CD4-positive, alpha-beta T cell (primary cell): ENCODE measurements at regions of chr6 and their contacts with region 1.

Region 1: DNA sequence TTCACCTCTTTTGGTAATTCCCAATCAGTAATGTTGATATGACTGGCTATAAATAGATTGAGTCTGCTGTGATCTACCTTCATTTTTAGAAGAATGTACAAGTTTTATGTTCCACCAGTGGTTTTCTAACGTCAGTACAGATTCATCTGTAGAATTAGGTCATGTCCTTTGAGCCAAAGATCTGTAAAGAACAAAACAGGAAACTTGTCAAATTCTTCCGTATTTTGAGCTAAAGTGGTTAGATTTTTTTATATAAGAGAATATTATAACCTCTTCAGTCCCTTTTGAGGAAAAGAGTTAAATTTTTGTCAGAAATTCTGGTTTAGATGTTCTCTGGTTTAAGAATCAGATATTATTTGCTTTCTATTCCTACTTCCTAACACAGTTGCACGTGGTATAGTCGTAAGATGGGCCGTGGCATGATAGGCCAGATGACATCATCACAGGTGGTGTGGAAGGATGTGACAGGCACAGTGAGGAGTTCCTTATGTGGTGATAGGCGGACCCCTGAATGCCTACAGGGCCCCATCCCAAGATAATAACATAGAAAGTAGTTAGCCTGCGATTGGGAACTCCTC is 62.3 kb downstream of the SNX9 start:
- DNase-seq: peak in 13 of 14 experiments; percentile 18 to 88 (median 50)
- ATAC-seq: peak; percentile 83
- H3K4me3 ChIP-seq: no peak overlapping the region
- H3K4me3 Mint-ChIP-seq: peak overlapping the region; percentile 6
- H3K27ac ChIP-seq: peak overlapping the region; percentile 83 to 93
- H3K27ac Mint-ChIP-seq: peak overlapping the region; percentile 95
- H3K4me1 ChIP-seq: peaks cover 16% of the 10 kb centered on the region
- H3K4me1 Mint-ChIP-seq: peaks cover 86% of the 10 kb centered on the region
- H3K27me3 ChIP-seq: no peaks in the 10 kb centered on the region
- H3K27me3 Mint-ChIP-seq: no peaks in the 10 kb centered on the region
- CTCF ChIP-seq: peak; percentile 19

Region 2: DNA sequence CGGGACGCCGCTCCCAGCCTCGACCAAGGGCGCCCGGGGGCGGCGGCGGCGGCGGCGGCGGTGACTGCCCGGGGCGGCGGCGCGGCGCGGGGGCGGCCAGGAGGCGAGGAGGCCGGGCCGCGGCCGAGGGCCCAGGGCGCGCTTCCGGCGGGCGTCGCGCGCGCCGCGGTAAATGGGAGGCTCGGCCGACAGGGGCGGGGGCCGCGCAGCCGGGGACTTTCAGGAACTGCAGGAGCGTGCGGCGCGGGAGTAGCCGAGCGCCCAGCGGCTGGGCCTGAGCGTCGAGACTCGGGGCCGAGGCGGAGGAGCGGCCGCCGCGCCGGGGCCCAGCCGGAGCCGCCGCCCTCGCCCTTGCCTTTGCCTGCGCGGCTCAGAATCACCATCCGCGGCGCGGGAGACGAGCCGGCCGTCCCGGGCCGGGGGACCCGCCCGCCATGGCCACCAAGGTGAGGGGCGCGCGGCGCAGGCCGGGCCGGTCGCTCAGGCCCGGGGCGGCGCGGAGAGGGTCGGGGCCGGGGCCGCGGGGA is 62.2 kb before region 1 on chr6 and contains the start of gene SNX9:
- CTCF ChIA-PET with region 1: interaction called, 4 read pairs
- POLR2A ChIA-PET with region 1: interaction called, 5 read pairs
- intact Hi-C with region 1: loop called in 1 of 2 experiments (anchors 1 kb)
- DNase-seq: peak in 13 of 14 experiments; percentile 38 to 88 (median 59)
- ATAC-seq: peak; percentile 46
- H3K4me3 ChIP-seq: peak within 1 kb of the TSS; percentile 78
- H3K4me3 Mint-ChIP-seq: peak within 1 kb of the TSS; percentile 96
- H3K27ac ChIP-seq: peak within 1 kb of the TSS; percentile 25 to 77
- H3K27ac Mint-ChIP-seq: peak within 1 kb of the TSS; percentile 98
- H3K4me1 ChIP-seq: peaks cover 17% of the 10 kb centered on the region
- H3K4me1 Mint-ChIP-seq: peaks cover 58% of the 10 kb centered on the region
- H3K27me3 ChIP-seq: no peaks in the 10 kb centered on the region
- H3K27me3 Mint-ChIP-seq: no peaks in the 10 kb centered on the region
- CTCF ChIP-seq: no peak
- total RNA-seq, gene SNX9: 46.6 to 48.5 TPM

Region 3: DNA sequence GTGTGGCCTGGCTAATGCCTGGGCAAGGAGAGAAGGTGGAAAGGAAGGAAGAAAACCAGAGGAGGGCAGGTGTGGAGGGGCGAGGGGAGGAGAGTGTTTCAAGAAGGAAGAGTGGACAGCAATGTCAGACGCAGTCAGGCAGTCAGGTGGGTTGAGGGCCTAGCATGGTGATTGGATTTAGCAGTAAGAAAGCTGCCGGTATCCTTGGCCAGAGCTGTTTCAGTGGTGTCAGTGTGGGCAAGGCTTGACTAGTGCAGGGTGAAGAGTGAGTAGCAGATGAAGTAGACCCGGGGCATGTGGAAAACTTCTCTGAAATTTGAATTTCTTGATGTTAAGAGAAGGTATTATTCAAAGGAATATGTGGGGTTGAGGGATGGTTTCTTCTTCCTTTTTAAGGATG is 35.3 kb before region 1 on chr6:
- CTCF ChIA-PET with region 1: no interaction called
- POLR2A ChIA-PET with region 1: no interaction called
- intact Hi-C with region 1: no loop called
- DNase-seq: no peak
- ATAC-seq: no peak
- H3K4me3 ChIP-seq: no peak overlapping the region
- H3K4me3 Mint-ChIP-seq: no peak overlapping the region
- H3K27ac ChIP-seq: no peak overlapping the region
- H3K27ac Mint-ChIP-seq: peak overlapping the region; percentile 8
- H3K4me1 ChIP-seq: peaks cover 20% of the 10 kb centered on the region
- H3K4me1 Mint-ChIP-seq: peaks cover 78% of the 10 kb centered on the region
- H3K27me3 ChIP-seq: no peaks in the 10 kb centered on the region
- H3K27me3 Mint-ChIP-seq: no peaks in the 10 kb centered on the region
- CTCF ChIP-seq: no peak

Region 4: DNA sequence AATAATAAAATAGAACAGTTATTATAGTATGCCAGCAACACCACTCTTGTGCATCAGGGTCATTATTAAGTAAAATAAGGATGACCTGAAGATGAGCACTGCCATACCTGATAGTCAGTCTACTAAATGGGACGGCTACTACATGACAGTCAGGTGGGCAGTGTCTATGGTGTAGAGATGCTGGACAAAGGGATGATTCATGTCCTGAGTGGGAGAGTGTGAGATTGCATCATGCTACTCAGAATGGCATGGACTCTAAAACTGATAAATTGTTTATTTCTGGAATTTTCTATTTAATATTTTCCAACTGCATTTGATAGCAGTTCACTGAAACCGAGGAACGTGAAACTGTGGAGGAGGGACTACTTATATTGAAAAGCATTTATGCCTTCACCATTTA is 23.5 kb before region 1 on chr6:
- CTCF ChIA-PET with region 1: interaction called, 3 read pairs
- POLR2A ChIA-PET with region 1: interaction called, 5 read pairs
- intact Hi-C with region 1: loop called in 1 of 2 experiments (anchors 2 kb)
- DNase-seq: no peak
- ATAC-seq: no peak
- H3K4me3 ChIP-seq: no peak overlapping the region
- H3K4me3 Mint-ChIP-seq: no peak overlapping the region
- H3K27ac ChIP-seq: no peak overlapping the region
- H3K27ac Mint-ChIP-seq: no peak overlapping the region
- H3K4me1 ChIP-seq: peaks cover 21% of the 10 kb centered on the region
- H3K4me1 Mint-ChIP-seq: peaks cover 88% of the 10 kb centered on the region
- H3K27me3 ChIP-seq: no peaks in the 10 kb centered on the region
- H3K27me3 Mint-ChIP-seq: no peaks in the 10 kb centered on the region
- CTCF ChIP-seq: no peak

Region 5: DNA sequence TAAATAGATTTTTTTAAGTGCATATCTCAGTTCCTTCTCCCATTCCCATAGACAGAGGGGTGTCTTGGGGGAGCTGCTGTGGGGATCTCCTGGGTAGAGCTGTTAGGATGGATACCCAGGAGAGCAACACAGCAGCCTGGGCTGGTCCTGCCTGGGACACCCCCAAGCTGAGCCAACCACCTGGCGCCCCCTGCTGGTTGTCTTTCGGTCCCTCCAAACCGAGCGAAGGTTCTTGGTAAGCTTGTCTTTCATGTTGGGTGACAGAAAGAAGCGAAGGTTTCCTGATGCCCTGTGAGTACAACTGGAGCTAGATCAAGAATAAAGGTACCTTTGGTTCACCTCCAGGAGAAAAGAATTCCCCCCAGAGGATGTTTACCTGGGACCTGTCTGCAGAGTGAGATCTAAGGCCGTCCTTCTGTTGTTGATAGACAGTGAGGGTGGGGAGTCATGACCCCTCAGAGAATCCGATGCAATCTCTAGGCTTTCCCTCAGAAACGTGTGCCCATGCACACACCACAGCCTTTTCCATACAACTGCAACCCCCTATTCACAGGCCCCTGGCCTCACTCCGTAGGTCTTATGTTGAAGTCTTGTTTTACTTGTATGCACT is 11.5 kb before region 1 on chr6:
- CTCF ChIA-PET with region 1: interaction called, 15 read pairs
- POLR2A ChIA-PET with region 1: interaction called, 13 read pairs
- intact Hi-C with region 1: no loop called
- DNase-seq: peak; percentile 75 to 92 (median 84)
- ATAC-seq: peak; percentile 74
- H3K4me3 ChIP-seq: no peak overlapping the region
- H3K4me3 Mint-ChIP-seq: no peak overlapping the region
- H3K27ac ChIP-seq: no peak overlapping the region
- H3K27ac Mint-ChIP-seq: peak overlapping the region; percentile 47
- H3K4me1 ChIP-seq: peaks cover 15% of the 10 kb centered on the region
- H3K4me1 Mint-ChIP-seq: peaks cover 39% of the 10 kb centered on the region
- H3K27me3 ChIP-seq: no peaks in the 10 kb centered on the region
- H3K27me3 Mint-ChIP-seq: no peaks in the 10 kb centered on the region
- CTCF ChIP-seq: peak; percentile 92

Region 6: DNA sequence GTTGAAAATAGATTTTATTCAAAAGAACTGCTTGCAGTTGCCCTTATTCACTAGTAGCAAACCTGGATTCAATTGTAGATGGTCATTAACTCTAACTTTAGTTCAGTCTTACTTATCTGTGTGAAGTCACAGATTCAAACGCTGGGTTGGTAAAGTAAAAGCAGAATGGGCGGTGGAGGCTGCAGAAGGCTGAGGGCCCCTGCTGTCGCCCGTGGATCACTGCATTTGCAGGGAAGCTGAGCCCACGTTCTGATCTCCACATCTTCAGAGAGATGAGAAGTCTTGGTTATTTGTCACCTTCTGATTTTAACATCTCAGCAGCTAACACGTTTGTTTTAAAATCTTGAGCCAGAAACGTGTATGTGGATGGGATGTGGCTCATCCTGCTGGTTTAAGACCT is 12.9 kb after region 1 on chr6:
- CTCF ChIA-PET with region 1: interaction called, 9 read pairs
- POLR2A ChIA-PET with region 1: interaction called, 5 read pairs
- intact Hi-C with region 1: loop called in 1 of 2 experiments (anchors 1 kb)
- DNase-seq: peak in 7 of 14 experiments; percentile 14 to 62 (median 39)
- ATAC-seq: peak; percentile 67
- H3K4me3 ChIP-seq: no peak overlapping the region
- H3K4me3 Mint-ChIP-seq: no peak overlapping the region
- H3K27ac ChIP-seq: no peak overlapping the region
- H3K27ac Mint-ChIP-seq: peak overlapping the region; percentile 72
- H3K4me1 ChIP-seq: peaks cover 3% of the 10 kb centered on the region
- H3K4me1 Mint-ChIP-seq: peaks cover 28% of the 10 kb centered on the region
- H3K27me3 ChIP-seq: no peaks in the 10 kb centered on the region
- H3K27me3 Mint-ChIP-seq: no peaks in the 10 kb centered on the region
- CTCF ChIP-seq: peak; percentile 31